ENCODE measurements at regions of chr14 and their contacts with region 1.

Region 1: GRCh38 chr14:89618811-89619551 is 201.9 kb upstream of the FOXN3 start:
- DNase-seq: peak; percentile 67
- ATAC-seq: peak; percentile 91
- H3K4me3 ChIP-seq: peak overlapping the region; percentile 78
- H3K27ac ChIP-seq: peak overlapping the region; percentile 87
- H3K4me1 ChIP-seq: peaks cover 12% of the 10 kb centered on the region
- H3K27me3 ChIP-seq: no peaks in the 10 kb centered on the region
- CTCF ChIP-seq: peak; percentile 4; the same call in 1 of the 2 replicates
- POLR2A ChIP-seq: peak; percentile 49; the same call in 1 of the 2 replicates
- RAD21 ChIP-seq: peak; percentile 34

Region 2: GRCh38 chr14:89416002-89416995 is 202.7 kb before region 1 on chr14:
- CTCF ChIA-PET with region 1: no interaction called
- POLR2A ChIA-PET with region 1: no interaction called
- dilution Hi-C with region 1: no loop called
- in situ Hi-C with region 1: loop called (anchors 10 kb)
- intact Hi-C with region 1: loop called (anchors 2 kb)
- DNase-seq: peak; percentile 97
- ATAC-seq: peak; percentile 81
- H3K4me3 ChIP-seq: peak overlapping the region; percentile 62
- H3K27ac ChIP-seq: peak overlapping the region; percentile 60
- H3K4me1 ChIP-seq: peaks cover 12% of the 10 kb centered on the region
- H3K27me3 ChIP-seq: no peaks in the 10 kb centered on the region
- CTCF ChIP-seq: no peak
- POLR2A ChIP-seq: peak; percentile 69
- RAD21 ChIP-seq: no peak; the same call in 1 of the 2 replicates

Region 3: DNA sequence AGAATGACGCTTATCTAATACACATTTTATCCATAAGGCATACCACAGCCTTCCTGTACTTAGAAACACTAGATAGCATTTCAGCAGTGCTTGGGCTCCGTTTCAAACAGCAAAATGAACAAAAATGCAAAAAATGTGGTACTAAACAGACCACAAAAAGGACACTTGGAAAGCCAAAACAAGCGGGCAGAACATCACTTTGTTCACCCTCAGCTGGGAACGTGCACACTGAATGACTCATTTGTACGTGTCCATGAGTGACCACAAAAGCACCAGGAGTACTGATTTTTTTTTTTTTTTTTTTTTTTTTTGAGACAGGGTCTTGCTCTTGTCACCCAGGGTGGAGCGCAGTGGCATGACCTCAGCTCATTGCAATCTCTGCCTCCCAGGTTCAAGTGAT is 193.1 kb before region 1 on chr14:
- CTCF ChIA-PET with region 1: no interaction called
- POLR2A ChIA-PET with region 1: no interaction called
- dilution Hi-C with region 1: no loop called
- in situ Hi-C with region 1: loop called (anchors 10 kb)
- intact Hi-C with region 1: no loop called
- DNase-seq: peak; percentile 99
- ATAC-seq: peak; percentile 76
- H3K4me3 ChIP-seq: no peak overlapping the region
- H3K27ac ChIP-seq: peak overlapping the region; percentile 16; the same call in 1 of the 2 replicates
- H3K4me1 ChIP-seq: peaks cover 23% of the 10 kb centered on the region
- H3K27me3 ChIP-seq: no peaks in the 10 kb centered on the region
- CTCF ChIP-seq: no peak
- POLR2A ChIP-seq: no peak
- RAD21 ChIP-seq: no peak; the same call in 1 of the 2 replicates

Region 4: GRCh38 chr14:89493877-89494634 is 124.9 kb before region 1 on chr14:
- CTCF ChIA-PET with region 1: no interaction called
- POLR2A ChIA-PET with region 1: no interaction called
- dilution Hi-C with region 1: no loop called
- in situ Hi-C with region 1: no loop called
- intact Hi-C with region 1: loop called (anchors 1 kb)
- DNase-seq: no peak
- ATAC-seq: no peak
- H3K4me3 ChIP-seq: no peak overlapping the region
- H3K27ac ChIP-seq: no peak overlapping the region
- H3K4me1 ChIP-seq: peaks cover 13% of the 10 kb centered on the region
- H3K27me3 ChIP-seq: no peaks in the 10 kb centered on the region
- CTCF ChIP-seq: no peak
- POLR2A ChIP-seq: no peak
- RAD21 ChIP-seq: no peak

Region 5: GRCh38 chr14:89767861-89768268 is 148.9 kb after region 1 on chr14:
- CTCF ChIA-PET with region 1: no interaction called
- POLR2A ChIA-PET with region 1: no interaction called
- dilution Hi-C with region 1: no loop called
- in situ Hi-C with region 1: no loop called
- intact Hi-C with region 1: loop called (anchors 1 kb)
- DNase-seq: peak; percentile 63
- ATAC-seq: peak; percentile 54
- H3K4me3 ChIP-seq: no peak overlapping the region
- H3K27ac ChIP-seq: no peak overlapping the region
- H3K4me1 ChIP-seq: peaks cover 13% of the 10 kb centered on the region
- H3K27me3 ChIP-seq: no peaks in the 10 kb centered on the region
- CTCF ChIP-seq: peak; percentile 62
- POLR2A ChIP-seq: no peak
- RAD21 ChIP-seq: peak; percentile 88

Region 6: GRCh38 chr14:89813617-89814031 is 194.6 kb after region 1 on chr14:
- CTCF ChIA-PET with region 1: no interaction called
- POLR2A ChIA-PET with region 1: no interaction called
- dilution Hi-C with region 1: no loop called
- in situ Hi-C with region 1: no loop called
- intact Hi-C with region 1: loop called (anchors 10 kb)
- DNase-seq: peak; percentile 96
- ATAC-seq: peak; percentile 96
- H3K4me3 ChIP-seq: no peak overlapping the region
- H3K27ac ChIP-seq: peak overlapping the region; percentile 34; the same call in 1 of the 2 replicates
- H3K4me1 ChIP-seq: peaks cover 8% of the 10 kb centered on the region
- H3K27me3 ChIP-seq: no peaks in the 10 kb centered on the region
- CTCF ChIP-seq: no peak
- POLR2A ChIP-seq: no peak
- RAD21 ChIP-seq: no peak; the same call in 1 of the 2 replicates

Measured in IMR-90 (cell line).